Mammary epithelial cell (primary cell): ENCODE measurements at regions of chr21 and their contacts with region 1.

Region 1: DNA sequence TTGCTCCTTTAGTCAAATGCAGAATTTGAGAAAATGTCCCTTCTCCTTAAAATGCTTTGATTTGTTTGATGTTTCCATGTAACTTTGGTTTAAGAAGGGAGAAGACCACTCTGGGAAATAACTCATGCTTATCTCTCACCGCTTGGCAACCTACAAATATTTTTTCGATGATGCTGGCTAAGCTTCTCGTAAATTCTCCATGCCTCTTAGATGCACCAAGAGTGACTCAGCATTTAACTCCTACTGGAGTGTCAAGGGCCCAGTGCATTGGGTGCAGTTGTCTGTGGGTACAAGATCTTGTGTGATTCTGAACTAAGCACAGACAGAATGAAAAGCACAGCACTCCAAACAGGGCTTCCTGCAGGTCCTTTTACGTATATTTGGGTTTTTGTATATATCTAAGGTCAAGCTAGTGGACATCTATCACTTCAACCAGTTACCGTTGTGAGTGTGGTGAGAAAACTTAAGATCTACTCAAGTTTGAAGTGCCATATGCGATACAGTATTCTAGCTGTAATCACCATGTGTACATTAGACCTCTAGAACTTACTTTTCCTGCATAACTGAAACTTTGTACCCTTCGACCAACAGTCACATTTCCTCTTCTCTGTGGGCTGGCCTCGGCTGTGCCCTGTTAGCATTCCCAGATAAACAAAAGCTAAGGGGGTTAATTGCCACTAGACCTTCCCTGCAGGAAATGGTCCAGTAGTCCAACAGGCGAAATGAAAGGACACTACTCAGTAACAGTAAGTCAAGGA is 55.8 kb downstream of the COL18A1 start:
- DNase-seq: peak; percentile 31
- H3K4me3 ChIP-seq: no peak overlapping the region
- H3K27ac ChIP-seq: no peak overlapping the region
- H3K4me1 ChIP-seq: peaks cover 2% of the 10 kb centered on the region
- H3K27me3 ChIP-seq: no peaks in the 10 kb centered on the region
- CTCF ChIP-seq: no peak

Region 2: GRCh38 chr21:45161038-45161945 is 299.5 kb before region 1 on chr21:
- CTCF ChIA-PET with region 1: no interaction called
- dilution Hi-C with region 1: loop called (anchors 5 kb)
- in situ Hi-C with region 1: no loop called
- intact Hi-C with region 1: no loop called
- DNase-seq: no peak
- H3K4me3 ChIP-seq: no peak overlapping the region
- H3K27ac ChIP-seq: no peak overlapping the region
- H3K4me1 ChIP-seq: peaks cover 7% of the 10 kb centered on the region
- H3K27me3 ChIP-seq: no peaks in the 10 kb centered on the region
- CTCF ChIP-seq: no peak

Region 3: GRCh38 chr21:45523411-45524101 is 62.8 kb after region 1 on chr21:
- CTCF ChIA-PET with region 1: no interaction called
- dilution Hi-C with region 1: loop called (anchors 5 kb)
- in situ Hi-C with region 1: no loop called
- intact Hi-C with region 1: no loop called
- DNase-seq: no peak
- H3K4me3 ChIP-seq: no peak overlapping the region
- H3K27ac ChIP-seq: no peak overlapping the region
- H3K4me1 ChIP-seq: peaks cover 6% of the 10 kb centered on the region
- H3K27me3 ChIP-seq: no peaks in the 10 kb centered on the region
- CTCF ChIP-seq: no peak

Region 4: GRCh38 chr21:45780647-45781046 is 319.9 kb after region 1 on chr21:
- CTCF ChIA-PET with region 1: no interaction called
- dilution Hi-C with region 1: no loop called
- in situ Hi-C with region 1: no loop called
- intact Hi-C with region 1: no loop called
- DNase-seq: no peak
- H3K4me3 ChIP-seq: no peak overlapping the region
- H3K27ac ChIP-seq: no peak overlapping the region
- H3K4me1 ChIP-seq: no peaks in the 10 kb centered on the region
- H3K27me3 ChIP-seq: peaks cover 6% of the 10 kb centered on the region
- CTCF ChIP-seq: no peak

Region 5: DNA sequence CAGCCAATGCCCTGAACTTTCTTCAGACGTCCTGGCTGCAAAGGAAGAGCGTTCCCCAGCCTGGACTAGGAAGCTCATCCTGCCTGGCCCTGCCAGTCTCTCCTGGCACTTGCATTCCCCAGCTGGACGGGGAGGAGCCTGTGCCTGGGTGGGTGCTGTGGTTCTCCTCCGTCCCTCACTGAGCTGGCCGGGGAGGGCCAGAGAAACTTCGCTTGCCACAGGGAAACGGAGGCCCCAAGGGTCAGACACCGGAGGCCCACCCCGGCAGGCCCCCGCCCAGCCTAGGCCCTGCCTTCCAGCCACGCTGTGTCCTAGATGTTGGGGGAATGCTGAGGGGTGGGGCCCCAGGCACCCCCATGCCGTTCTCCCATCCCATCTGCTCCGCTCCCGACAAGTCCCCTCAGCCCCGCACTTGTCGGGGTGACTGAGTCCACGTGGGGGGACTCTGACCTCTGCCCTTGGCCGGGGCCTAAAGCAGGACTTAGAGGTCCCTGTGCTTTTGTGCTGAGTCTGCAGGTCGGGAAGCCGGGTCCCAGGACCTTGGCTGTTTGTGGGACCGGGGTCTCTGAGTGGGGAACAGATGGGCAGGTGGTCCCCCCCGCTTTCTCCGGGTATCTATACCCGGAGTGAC is 689.8 kb after region 1 on chr21:
- CTCF ChIA-PET with region 1: no interaction called
- dilution Hi-C with region 1: no loop called
- in situ Hi-C with region 1: no loop called
- intact Hi-C with region 1: no loop called
- DNase-seq: no peak
- H3K4me3 ChIP-seq: no peak overlapping the region
- H3K27ac ChIP-seq: no peak overlapping the region
- H3K4me1 ChIP-seq: peaks cover 8% of the 10 kb centered on the region
- H3K27me3 ChIP-seq: no peaks in the 10 kb centered on the region
- CTCF ChIP-seq: no peak